Upper lobe of right lung (tissue), 1 donor: ENCODE measurements at regions of chr13 and their contacts with region 1.

Region 1: GRCh38 chr13:100533588-100534041 is 55.0 kb downstream of the GGACT start:
- DNase-seq: no peak
- ATAC-seq: peak; percentile 76
- H3K4me3 ChIP-seq: no peak overlapping the region
- H3K27ac ChIP-seq: no peak overlapping the region
- H3K4me1 ChIP-seq: no peaks in the 10 kb centered on the region
- H3K27me3 ChIP-seq: no peaks in the 10 kb centered on the region
- CTCF ChIP-seq: no peak

Region 2: GRCh38 chr13:100434010-100434763 is 99.4 kb before region 1 on chr13:
- intact Hi-C with region 1: no loop called
- DNase-seq: no peak
- ATAC-seq: no peak
- H3K4me3 ChIP-seq: no peak overlapping the region
- H3K27ac ChIP-seq: no peak overlapping the region
- H3K4me1 ChIP-seq: no peaks in the 10 kb centered on the region
- H3K27me3 ChIP-seq: no peaks in the 10 kb centered on the region
- CTCF ChIP-seq: no peak

Region 3: DNA sequence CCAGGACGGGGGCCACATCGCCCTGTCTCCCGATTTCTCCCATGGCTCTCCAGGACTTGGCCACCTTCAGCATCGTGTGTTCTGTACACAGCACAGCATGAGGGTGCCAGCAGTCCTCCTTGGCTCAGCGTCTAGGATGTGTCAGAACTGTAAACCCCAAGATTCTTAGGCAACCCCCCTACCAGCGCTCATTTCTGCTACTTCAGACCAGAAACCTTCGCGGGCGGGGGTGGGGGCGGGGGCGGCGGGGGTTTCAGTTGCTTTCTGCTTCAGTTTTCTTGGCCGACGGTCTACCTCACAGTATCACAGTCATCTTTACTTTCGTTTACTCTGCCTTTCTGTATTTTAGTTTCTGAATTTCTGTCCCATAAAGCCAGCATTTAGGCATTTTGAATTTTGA is 27.5 kb before region 1 on chr13:
- intact Hi-C with region 1: loop called (anchors 2 kb)
- DNase-seq: no peak
- ATAC-seq: no peak
- H3K4me3 ChIP-seq: no peak overlapping the region
- H3K27ac ChIP-seq: no peak overlapping the region
- H3K4me1 ChIP-seq: no peaks in the 10 kb centered on the region
- H3K27me3 ChIP-seq: no peaks in the 10 kb centered on the region
- CTCF ChIP-seq: no peak